Dendritic cell treated with granulocyte-macrophage colony-stimulating factor and Interleukin-4, amounts not matched to agents 40 ng/mL and 50 ng/mL, for 4 days (primary cell): ENCODE measurements at regions of chr11 and their contacts with region 1.

Region 1: DNA sequence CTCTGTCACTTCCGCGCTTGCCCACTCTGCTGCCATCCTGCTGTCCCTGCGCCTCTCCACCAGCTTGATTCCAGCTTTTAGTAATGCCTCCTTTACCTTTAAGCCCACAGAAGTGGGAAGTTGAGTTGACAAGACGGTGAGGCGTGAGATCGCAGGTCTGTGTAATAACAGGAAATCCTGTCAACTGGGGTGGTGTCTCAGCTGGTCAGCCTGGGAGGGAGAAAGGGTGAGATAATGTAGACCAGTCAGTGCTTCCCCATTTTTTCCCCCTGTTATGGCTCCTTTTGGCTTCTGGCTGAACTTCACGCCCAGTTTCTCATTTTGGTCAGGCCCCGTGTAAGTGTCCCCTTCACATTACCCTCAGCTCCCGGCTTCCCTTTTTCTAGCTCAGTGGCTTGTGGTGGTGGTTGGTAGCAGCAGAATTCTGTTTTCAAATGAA is 98.9 kb downstream of the TRAF6 start:
- H3K4me3 Mint-ChIP-seq: peak overlapping the region; percentile 14
- H3K27ac Mint-ChIP-seq: peak overlapping the region; percentile 73
- H3K4me1 Mint-ChIP-seq: peaks cover 69% of the 10 kb centered on the region
- H3K27me3 Mint-ChIP-seq: peaks cover 32% of the 10 kb centered on the region

Region 2: DNA sequence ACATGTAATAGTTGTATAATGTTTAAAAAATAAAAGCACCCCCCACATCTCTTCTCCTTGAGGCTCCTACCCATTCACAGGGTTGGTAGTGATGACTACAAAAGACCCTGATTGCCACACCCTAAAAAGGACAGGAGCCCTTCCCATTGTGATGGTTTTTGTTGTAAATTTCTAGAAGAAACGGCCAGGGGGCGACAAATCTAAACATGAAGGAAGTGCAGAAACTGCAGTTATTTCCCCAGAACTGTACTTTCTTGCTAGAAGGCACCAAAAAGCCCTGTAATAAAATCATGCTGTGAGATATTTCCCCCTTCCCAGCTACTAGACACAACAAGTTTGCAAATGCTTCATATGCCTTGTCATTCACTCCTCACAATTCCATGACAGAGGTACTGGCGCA is 104.3 kb before region 1 on chr11:
- intact Hi-C with region 1: no loop called
- H3K4me3 Mint-ChIP-seq: no peak overlapping the region
- H3K27ac Mint-ChIP-seq: no peak overlapping the region
- H3K4me1 Mint-ChIP-seq: peaks cover 5% of the 10 kb centered on the region
- H3K27me3 Mint-ChIP-seq: peaks cover 8% of the 10 kb centered on the region

Region 3: DNA sequence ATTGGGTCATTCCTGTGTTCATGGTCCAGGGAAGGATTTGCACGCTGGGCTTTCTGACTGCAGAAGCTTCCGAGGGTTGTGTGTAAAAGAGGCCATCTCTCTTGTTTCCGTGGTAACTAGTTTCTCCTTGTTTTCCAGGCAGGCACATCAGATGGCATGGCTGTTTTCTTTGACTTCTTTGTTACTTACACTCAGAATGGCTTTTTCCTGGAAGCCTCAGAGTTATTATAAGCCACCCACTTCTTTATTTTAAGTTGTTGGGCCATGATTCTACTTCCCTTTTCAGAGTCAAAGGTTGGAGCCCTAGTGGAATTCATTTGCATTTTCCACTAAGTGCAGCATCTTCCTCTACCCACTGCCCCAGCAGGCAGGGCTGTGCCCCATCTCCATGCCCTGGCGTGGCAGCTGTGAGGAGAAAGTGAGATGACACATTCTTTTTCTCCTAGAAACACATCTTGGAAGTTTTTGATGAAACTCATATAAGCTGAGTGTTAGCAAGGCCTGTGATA is 20.2 kb before region 1 on chr11:
- intact Hi-C with region 1: loop called (anchors 2 kb)
- H3K4me3 Mint-ChIP-seq: no peak overlapping the region
- H3K27ac Mint-ChIP-seq: peak overlapping the region; percentile 77
- H3K4me1 Mint-ChIP-seq: peaks cover 75% of the 10 kb centered on the region
- H3K27me3 Mint-ChIP-seq: peaks cover 31% of the 10 kb centered on the region

Region 4: GRCh38 chr11:36455658-36456111 is 44.5 kb after region 1 on chr11:
- intact Hi-C with region 1: no loop called
- H3K4me3 Mint-ChIP-seq: no peak overlapping the region
- H3K27ac Mint-ChIP-seq: peak overlapping the region; percentile 37
- H3K4me1 Mint-ChIP-seq: peaks cover 43% of the 10 kb centered on the region
- H3K27me3 Mint-ChIP-seq: peaks cover 34% of the 10 kb centered on the region

Region 5: GRCh38 chr11:36469063-36469462 is 57.8 kb after region 1 on chr11:
- intact Hi-C with region 1: no loop called
- H3K4me3 Mint-ChIP-seq: no peak overlapping the region
- H3K27ac Mint-ChIP-seq: no peak overlapping the region
- H3K4me1 Mint-ChIP-seq: peaks cover 6% of the 10 kb centered on the region
- H3K27me3 Mint-ChIP-seq: peaks cover 9% of the 10 kb centered on the region

Region 6: DNA sequence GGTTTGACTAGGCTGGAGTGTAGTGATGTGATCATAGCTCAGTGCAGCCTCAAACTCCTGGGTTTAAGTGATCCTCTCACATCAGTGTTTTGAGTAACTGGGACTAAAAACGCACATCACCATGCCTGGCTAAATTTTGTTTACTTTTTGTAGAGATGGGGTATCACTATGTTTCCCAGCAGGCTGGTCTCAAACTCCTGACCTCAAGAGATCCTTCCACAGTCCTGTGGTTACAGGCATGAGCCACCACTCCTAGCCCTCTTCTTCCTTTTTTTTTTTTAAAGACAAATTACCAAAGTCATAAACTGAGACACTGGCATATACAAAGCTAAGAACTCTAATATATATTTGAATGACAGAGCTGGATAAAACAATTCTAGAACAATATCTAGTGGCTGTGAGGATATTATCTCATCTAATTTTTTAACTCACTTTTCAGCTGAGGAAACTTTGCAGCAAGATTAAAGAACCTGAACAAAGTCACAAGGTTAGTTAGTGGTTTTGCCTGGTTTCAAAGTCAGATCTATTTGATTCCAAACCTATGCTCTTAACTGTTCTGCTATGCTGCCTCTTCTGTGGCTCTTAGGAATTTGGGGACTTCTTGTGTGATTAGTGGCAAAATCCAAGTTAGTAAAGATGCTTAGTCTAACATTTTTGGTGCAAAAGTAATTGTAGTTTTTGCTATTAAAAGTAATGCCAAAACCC is 282.1 kb after region 1 on chr11:
- intact Hi-C with region 1: no loop called
- H3K4me3 Mint-ChIP-seq: no peak overlapping the region
- H3K27ac Mint-ChIP-seq: no peak overlapping the region
- H3K4me1 Mint-ChIP-seq: no peaks in the 10 kb centered on the region
- H3K27me3 Mint-ChIP-seq: no peaks in the 10 kb centered on the region